Left cardiac atrium (tissue), 4 donors: ENCODE measurements at regions of chr19 and their contacts with region 1.

Region 1: DNA sequence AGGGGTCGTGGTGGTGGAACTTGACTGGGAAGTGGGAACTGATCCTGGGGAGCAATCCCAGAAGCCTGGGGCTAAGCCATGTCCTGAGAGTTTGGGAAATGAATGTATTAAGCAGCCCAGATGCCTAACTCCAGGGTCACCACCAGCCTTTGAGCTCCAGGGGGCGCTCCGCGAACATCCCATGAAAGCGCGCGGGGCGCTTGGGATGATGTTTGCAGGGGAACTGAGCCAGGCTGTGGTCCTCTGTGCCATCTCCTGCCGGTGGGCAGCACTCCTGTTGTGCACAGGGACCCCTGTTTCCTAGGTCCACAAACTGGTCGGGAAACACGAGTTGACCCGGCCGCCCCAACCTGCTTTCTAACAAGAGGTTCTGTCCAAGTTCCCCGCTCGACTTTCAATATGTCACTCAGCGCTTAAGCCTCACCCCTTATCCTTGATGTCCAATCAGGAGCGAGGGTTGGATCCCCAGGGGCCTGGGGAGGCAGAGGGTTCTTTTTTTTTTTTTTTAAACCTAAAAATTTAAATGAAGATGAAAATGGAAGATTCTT is 14.4 kb downstream of the LEUTX start:
- DNase-seq: peak; percentile 78
- ATAC-seq: peak; percentile 97 to 98

Region 2: DNA sequence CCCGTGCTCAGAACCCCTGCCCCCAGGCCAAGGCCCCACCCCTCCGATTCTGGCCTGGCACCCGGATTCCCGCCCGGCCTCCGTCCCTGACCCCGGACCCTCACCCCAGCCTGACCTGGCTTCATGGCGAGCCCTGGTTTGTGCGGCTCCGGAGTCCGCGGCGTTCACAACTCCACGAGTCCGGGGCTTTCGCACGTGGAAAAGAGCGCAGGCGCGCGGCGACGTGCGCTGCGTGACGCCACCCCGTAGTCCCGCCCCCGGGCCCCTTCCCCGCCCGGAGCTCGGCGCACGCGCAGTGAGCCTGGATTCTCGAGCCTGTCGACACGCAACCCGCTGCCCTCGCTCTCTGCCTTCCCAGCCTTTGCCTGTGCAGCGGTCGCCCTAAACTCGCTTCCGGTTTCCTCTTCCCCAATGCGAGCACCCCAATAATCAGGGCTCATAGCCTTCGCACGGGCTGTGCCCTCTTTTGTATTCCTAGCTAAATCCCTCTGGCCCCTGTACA is 53.2 kb after region 1 on chr19 and contains the start of gene FBL:
- intact Hi-C with region 1: loop called (anchors 5 to 10 kb)
- DNase-seq: peak; percentile 97
- ATAC-seq: peak; percentile 97
- total RNA-seq, gene FBL: 67.7 to 87.7 TPM

Region 3: GRCh38 chr19:39969681-39970424 is 176.8 kb after region 1 on chr19:
- intact Hi-C with region 1: loop called in 1 of 2 experiments (anchors 5 kb)
- DNase-seq: no peak
- ATAC-seq: no peak